Activated CD4-positive, alpha-beta memory T cell treated with anti-CD3 and anti-CD28 coated beads for 36 hours (primary cell): ENCODE measurements at regions of chrX and their contacts with region 1.

Region 1: GRCh38 chrX:124993735-124994134 is 325.9 kb upstream of the TEX13C start:
- DNase-seq: no peak
- H3K4me3 Mint-ChIP-seq: no peak overlapping the region
- H3K27ac Mint-ChIP-seq: no peak overlapping the region
- H3K4me1 Mint-ChIP-seq: no peaks in the 10 kb centered on the region
- H3K27me3 Mint-ChIP-seq: peaks cover 3% of the 10 kb centered on the region

Region 2: DNA sequence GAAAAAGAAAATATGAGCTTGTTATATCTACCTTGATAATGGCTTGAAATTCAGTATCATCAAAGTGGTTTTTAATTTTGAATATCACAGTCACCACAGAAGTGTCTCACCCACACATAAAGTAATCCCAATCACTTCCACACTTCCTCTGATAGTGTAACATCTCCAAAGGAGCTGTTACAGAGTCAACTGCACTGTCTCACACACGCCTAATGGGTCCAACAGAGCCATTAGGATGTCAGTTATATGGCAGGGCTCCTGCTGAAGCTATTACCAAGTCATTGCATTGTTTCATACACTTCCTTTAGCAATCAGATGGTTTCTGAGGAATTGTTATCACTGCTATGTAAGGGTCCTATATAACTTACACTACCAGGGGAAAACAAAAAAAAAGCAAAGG is 106.2 kb before region 1 on chrX:
- CTCF ChIA-PET with region 1: no interaction called
- POLR2A ChIA-PET with region 1: no interaction called
- intact Hi-C with region 1: no loop called
- DNase-seq: no peak
- H3K4me3 Mint-ChIP-seq: no peak overlapping the region
- H3K27ac Mint-ChIP-seq: no peak overlapping the region
- H3K4me1 Mint-ChIP-seq: no peaks in the 10 kb centered on the region
- H3K27me3 Mint-ChIP-seq: no peaks in the 10 kb centered on the region

Region 3: GRCh38 chrX:125004799-125005198 is 11.1 kb after region 1 on chrX:
- CTCF ChIA-PET with region 1: no interaction called
- POLR2A ChIA-PET with region 1: no interaction called
- intact Hi-C with region 1: loop called (anchors 1 kb)
- DNase-seq: no peak
- H3K4me3 Mint-ChIP-seq: no peak overlapping the region
- H3K27ac Mint-ChIP-seq: no peak overlapping the region
- H3K4me1 Mint-ChIP-seq: peaks cover 5% of the 10 kb centered on the region
- H3K27me3 Mint-ChIP-seq: no peaks in the 10 kb centered on the region